ENCODE measurements at regions of chr11 and their contacts with region 1.

Region 1: DNA sequence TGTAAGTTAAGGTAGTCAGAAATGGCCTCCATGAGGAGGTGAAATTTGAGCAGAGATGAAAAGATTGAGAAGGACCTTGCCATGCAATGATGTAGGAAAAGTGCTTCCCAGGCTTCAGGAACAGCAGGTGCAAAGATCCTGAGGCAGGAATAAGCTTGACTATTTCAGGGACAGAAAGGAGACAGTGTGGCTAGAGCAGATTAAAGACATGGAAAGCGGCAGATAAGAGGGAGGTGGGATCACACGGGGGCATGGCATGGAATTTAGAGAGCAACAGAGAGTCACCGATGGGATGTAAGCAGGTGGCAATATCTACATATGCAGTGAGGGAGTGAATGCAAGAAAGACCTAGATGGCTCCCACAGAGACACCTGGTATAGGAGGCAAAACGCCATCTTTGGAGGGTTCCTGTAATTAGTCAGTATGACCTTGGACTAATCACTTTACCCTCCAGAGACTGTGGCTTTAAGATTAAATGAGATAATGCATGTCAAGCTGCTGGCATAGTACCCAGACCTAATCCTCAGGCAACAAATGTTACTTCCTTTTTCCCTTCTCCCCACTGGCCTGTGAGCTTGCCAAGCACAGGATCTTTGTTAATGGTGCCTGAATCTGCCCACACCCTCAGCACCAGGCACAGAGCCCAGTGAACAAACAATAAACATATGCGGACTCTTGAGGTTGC is 24.6 kb upstream of the ACER3 start:
- DNase-seq: peak; percentile 58 to 68
- H3K4me3 ChIP-seq: no peak overlapping the region
- H3K27ac ChIP-seq: peak overlapping the region; percentile 13 to 64
- H3K4me1 ChIP-seq: peaks cover 0 to 11% of the 10 kb centered on the region in 2 donors
- H3K27me3 ChIP-seq: no peaks in the 10 kb centered on the region
- CTCF ChIP-seq: no peak
- POLR2A ChIP-seq: no peak

Region 2: DNA sequence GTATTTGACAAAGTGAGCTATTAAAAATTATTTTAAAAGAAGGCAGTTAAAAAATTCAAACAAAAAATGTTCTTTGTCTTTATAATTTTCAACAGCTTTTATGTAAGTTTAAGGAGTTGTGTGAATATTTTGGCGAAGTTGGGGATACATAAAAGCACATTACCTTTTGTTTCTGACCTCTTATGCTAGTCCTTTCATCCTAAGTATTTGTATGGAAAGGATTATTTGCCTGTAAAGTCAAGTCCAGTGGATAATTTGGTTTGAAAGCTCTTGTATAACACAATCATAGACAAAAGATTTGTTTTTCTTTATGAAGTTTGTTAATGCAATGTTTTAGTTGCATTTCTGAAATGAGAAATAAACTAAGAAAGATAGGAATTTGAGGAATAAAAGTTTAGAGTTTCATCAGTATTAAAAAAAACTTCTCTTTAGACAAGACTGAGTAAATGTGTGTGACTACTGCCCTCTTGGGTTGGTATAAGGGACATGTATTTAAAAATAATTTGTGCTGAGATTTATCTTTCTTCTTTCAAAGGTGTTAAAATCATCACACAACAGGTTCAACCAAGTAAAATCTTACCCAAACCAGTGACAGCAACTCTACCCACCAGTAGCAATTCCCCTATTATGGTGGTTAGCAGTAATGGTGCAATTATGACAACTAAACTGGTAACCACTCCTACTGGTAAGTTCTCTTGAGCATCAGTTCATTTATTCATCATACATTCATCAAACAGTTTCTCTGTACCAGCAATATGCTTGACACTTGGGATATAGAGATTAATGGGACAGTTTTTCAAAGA is 323.0 kb before region 1 on chr11:
- intact Hi-C with region 1: no loop called
- DNase-seq: no peak
- H3K4me3 ChIP-seq: no peak overlapping the region
- H3K27ac ChIP-seq: no peak overlapping the region
- H3K4me1 ChIP-seq: no peaks in the 10 kb centered on the region
- H3K27me3 ChIP-seq: no peaks in the 10 kb centered on the region
- CTCF ChIP-seq: no peak
- POLR2A ChIP-seq: no peak

Region 3: DNA sequence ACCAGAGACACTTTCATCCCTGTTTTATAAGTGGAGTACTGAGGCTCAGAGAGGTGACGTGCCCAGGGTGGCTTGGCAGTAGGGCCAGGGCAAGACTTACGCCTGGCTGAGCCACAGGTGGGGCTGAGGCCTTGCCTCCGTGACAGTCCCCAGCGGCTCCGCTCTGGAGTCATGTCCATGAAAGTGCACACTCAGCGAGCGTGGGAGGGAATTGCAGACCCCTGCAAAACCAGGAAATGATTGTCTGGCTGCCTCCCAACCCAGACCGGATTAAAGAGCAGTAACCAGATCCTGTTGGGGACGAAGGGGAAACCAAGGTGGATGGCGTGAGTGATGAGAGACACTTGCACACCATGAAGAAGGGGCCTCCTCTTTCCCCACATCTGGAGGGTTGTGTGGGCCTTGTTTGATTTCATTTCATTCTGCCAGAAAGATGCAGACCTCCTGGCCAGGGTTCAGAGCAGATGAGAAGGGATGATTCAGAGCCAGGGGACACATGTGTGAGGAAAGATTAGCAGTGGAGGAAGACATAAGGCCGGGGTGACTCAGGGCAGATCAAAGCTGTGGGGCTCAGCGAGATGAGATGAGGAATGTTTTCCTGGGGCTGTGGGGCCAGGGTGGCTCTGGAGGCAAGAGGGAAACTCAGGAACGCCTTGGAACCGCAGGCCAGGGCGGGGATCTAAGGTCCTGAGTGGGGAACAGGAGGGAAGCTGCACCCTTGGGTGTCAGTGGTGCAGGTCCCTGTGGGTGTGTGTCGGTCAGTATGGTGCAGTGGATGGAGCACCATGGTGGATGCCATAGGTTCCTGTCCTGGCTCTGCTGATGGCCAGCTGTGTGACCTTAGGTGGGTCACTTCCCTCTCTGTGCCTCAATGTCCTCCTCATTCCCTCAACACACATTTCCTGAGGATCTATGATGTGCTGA is 135.6 kb before region 1 on chr11:
- intact Hi-C with region 1: no loop called
- DNase-seq: no peak
- H3K4me3 ChIP-seq: no peak overlapping the region
- H3K27ac ChIP-seq: peak overlapping the region in 1 of 2 donors; percentile 71
- H3K4me1 ChIP-seq: no peaks in the 10 kb centered on the region
- H3K27me3 ChIP-seq: no peaks in the 10 kb centered on the region
- CTCF ChIP-seq: no peak
- POLR2A ChIP-seq: no peak

Region 4: DNA sequence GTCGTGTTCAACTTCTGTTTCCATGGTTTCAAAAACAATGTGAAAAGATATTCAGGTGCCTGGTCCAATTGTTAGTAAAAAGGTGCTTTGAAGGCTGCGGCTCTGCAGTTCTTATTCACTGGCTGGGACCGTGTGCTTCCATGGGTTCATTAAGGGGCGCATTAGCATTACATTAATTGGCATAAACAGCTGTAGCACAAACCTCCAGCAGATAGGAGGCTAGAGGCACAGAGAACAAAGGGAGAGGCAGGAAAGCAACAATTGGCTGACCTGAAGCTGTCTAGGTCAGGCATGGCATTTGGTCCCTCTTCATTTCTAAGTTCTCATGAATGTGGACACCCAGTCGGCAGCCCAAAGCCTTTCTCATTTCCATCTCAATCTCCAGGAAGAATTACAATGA is 621.3 kb after region 1 on chr11:
- intact Hi-C with region 1: loop called (anchors 10 kb)
- DNase-seq: no peak
- H3K4me3 ChIP-seq: no peak overlapping the region
- H3K27ac ChIP-seq: no peak overlapping the region
- H3K4me1 ChIP-seq: no peaks in the 10 kb centered on the region
- H3K27me3 ChIP-seq: no peaks in the 10 kb centered on the region
- CTCF ChIP-seq: no peak
- POLR2A ChIP-seq: no peak